ENCODE measurements at regions of chr1 and their contacts with region 1.

Region 1: DNA sequence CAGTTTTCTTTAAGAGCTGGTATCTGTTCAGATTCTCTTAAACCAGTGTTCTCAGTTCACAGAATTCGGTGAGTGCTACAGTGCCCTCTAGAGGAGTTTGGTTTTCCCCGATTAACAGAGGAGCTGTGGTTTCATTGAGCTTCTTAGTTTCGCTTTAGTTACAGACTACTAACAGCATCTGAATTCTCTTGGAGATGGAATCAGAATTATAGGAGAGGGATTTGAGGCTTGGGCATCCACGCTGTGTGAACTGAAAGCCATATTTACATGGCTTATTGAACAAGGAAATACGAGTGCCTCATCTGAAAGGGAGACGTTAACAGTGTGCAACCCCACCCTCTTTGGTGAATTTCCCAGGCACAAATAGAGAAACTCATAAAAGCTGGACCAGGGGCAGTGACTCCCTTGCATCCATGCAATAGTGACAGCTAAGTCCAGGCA is 202.0 kb downstream of the USH2A start:
- DNase-seq: peak; percentile 61
- ATAC-seq: peak; percentile 98
- H3K4me3 ChIP-seq: peak overlapping the region; percentile 59 to 71 (median 68); a peak in 4 of 6 replicates
- H3K27ac ChIP-seq: no peak overlapping the region
- H3K4me1 ChIP-seq: peaks cover 8% of the 10 kb centered on the region; the same call in 1 of the 2 replicates
- H3K27me3 ChIP-seq: no peaks in the 10 kb centered on the region
- CTCF ChIP-seq: peak; percentile 77
- EP300 ChIP-seq: no peak
- POLR2A ChIP-seq: no peak
- RAD21 ChIP-seq: no peak

Region 2: GRCh38 chr1:216034504-216034903 is 186.8 kb before region 1 on chr1:
- CTCF ChIA-PET with region 1: no interaction called
- POLR2A ChIA-PET with region 1: no interaction called
- in situ Hi-C with region 1: no loop called
- intact Hi-C with region 1: loop called (anchors 10 kb)
- DNase-seq: no peak
- ATAC-seq: peak; percentile 91
- H3K4me3 ChIP-seq: no peak overlapping the region
- H3K27ac ChIP-seq: no peak overlapping the region
- H3K4me1 ChIP-seq: no peaks in the 10 kb centered on the region
- H3K27me3 ChIP-seq: no peaks in the 10 kb centered on the region
- CTCF ChIP-seq: peak; percentile 60
- EP300 ChIP-seq: no peak
- POLR2A ChIP-seq: no peak
- RAD21 ChIP-seq: no peak

Region 3: DNA sequence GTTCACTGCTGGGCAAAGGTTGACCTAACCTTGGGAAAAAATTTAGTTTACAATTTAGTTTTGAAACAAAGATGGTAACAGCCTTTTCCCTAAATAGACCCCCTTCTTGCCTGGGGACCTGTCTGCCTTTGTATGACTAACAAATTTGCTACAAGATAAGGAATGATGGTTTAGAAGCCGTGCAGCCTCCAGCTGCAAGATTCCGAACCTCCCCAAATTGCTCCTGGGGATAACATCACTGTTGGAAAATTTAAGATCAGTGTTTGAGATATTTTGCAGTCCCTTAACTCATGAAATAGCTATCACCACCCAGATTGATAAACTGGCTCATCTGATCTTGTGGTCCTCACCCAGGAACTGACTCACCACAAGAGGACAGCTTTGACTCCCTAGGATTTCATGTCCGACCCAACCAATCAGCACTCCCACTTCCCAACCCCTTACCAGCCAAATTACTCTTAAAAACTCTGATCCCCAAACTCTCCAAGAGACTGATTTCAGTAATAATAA is 52.7 kb before region 1 on chr1:
- CTCF ChIA-PET with region 1: no interaction called
- POLR2A ChIA-PET with region 1: no interaction called
- in situ Hi-C with region 1: no loop called
- intact Hi-C with region 1: loop called (anchors 2 kb)
- DNase-seq: no peak
- ATAC-seq: no peak
- H3K4me3 ChIP-seq: no peak overlapping the region
- H3K27ac ChIP-seq: no peak overlapping the region
- H3K4me1 ChIP-seq: no peaks in the 10 kb centered on the region
- H3K27me3 ChIP-seq: no peaks in the 10 kb centered on the region
- CTCF ChIP-seq: no peak
- EP300 ChIP-seq: no peak
- POLR2A ChIP-seq: no peak
- RAD21 ChIP-seq: no peak

Region 4: DNA sequence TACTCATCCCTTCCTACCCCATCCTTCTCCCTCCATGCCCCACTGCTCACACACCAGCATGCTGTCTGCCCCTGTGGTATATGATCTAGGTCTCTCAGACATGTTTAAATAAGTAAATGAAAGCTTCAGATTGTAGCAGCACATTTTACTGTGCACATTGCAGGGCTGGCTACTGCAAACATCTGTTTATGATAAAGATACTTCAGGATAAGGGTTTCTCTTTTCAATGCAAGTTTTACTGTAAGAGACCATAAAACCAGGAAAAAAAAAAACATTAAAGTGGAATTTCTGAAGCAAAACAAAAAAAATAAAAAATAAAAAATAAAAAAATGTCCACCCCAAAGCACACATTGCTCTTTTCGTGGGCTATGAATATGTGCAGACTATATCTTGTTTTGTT is 17.6 kb after region 1 on chr1:
- CTCF ChIA-PET with region 1: no interaction called
- POLR2A ChIA-PET with region 1: no interaction called
- in situ Hi-C with region 1: no loop called
- intact Hi-C with region 1: no loop called
- DNase-seq: no peak
- ATAC-seq: no peak
- H3K4me3 ChIP-seq: no peak overlapping the region
- H3K27ac ChIP-seq: no peak overlapping the region
- H3K4me1 ChIP-seq: no peaks in the 10 kb centered on the region
- H3K27me3 ChIP-seq: no peaks in the 10 kb centered on the region
- CTCF ChIP-seq: no peak
- EP300 ChIP-seq: no peak
- POLR2A ChIP-seq: no peak
- RAD21 ChIP-seq: no peak

Region 5: DNA sequence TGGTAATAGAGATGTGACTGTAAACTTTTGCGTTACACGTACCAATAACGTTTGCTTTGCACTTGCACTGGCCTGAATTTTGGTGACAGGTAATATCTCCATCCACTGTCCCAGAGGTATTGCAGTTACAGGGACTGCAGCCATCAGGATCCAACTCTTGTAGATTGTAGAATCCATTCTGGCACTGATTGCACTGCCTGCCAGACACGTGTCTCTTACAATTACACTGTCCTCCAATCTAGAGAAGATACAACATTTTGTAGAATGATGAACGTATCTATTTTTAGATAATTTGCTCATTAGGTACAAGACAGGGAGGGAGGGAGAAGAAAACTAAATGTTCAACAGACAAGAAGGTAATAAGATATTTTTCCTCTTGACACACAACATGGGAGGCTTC is 29.6 kb after region 1 on chr1:
- CTCF ChIA-PET with region 1: no interaction called
- POLR2A ChIA-PET with region 1: no interaction called
- in situ Hi-C with region 1: no loop called
- intact Hi-C with region 1: no loop called
- DNase-seq: no peak
- ATAC-seq: no peak
- H3K4me3 ChIP-seq: no peak overlapping the region
- H3K27ac ChIP-seq: no peak overlapping the region
- H3K4me1 ChIP-seq: no peaks in the 10 kb centered on the region
- H3K27me3 ChIP-seq: no peaks in the 10 kb centered on the region
- CTCF ChIP-seq: no peak
- EP300 ChIP-seq: no peak
- POLR2A ChIP-seq: no peak
- RAD21 ChIP-seq: no peak

Measured in HepG2 (cell line).